Common myeloid progenitor, CD34-positive (primary cell): ENCODE measurements at regions of chr6 and their contacts with region 1.

Region 1: DNA sequence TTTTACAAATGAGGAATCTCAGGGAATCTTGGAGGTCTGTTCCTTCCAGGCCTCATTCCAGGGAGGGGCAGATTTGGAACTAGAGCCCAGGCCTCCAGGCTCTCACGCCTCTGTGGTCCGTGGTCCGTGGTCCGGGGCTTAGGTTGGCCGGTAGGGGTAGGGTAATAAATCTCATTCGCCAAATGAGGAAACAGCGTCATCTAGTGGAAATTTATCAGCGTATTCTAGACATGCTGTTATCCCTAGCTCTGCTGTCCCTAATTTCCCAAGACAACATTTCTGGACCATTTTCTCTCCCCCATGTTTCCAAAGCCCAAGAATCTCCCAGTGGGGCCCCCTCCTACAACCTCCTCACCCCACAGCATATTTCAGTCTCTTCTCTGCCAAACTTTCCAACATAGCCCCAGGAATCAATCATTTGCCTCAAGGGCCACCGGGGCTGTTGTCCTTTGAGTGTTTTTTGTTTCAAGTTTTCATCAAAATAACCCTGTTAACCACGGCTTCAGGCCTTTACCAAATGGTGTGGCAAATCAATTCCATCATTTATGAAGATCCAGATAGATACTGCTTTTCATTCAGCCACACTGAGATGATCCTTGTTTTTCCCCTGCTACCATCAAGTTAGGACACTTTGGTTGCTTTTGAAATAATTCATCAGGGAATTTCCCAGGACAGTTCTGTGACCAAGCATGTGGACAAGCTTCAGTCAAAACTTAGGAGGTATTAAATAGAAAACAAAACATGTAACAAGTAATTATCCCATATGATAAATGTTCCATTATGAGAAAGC is 126.8 kb downstream of the ALDH8A1 start:
- DNase-seq: peak; percentile 72 to 81 (median 76)
- H3K4me3 ChIP-seq: no peak overlapping the region
- H3K27ac ChIP-seq: no peak overlapping the region
- H3K4me1 ChIP-seq: no peaks in the 10 kb centered on the region
- H3K27me3 ChIP-seq: no peaks in the 10 kb centered on the region

Region 2: DNA sequence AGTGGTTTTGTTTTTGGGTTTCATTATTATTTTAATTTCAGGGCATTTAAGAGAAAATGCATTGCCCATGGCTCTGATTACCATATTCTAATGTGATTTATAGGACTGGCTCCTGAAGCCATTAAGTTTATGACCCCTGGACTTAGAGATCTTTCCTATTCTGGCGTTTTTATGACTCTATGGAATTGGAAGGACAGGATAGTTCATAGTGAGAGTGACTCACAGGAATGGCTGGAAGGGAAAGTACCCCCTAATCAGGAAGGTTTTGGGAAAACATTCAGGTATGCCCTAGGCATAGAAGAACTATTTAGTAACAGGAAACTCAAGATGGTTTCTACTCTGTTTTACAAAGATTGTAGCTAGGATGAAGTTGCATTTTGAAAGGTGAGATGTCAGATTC is 662.1 kb before region 1 on chr6:
- CTCF ChIA-PET with region 1: interaction called, 13 read pairs
- POLR2A ChIA-PET with region 1: no interaction called
- DNase-seq: no peak
- H3K4me3 ChIP-seq: no peak overlapping the region
- H3K27ac ChIP-seq: no peak overlapping the region
- H3K4me1 ChIP-seq: no peaks in the 10 kb centered on the region
- H3K27me3 ChIP-seq: no peaks in the 10 kb centered on the region

Region 3: GRCh38 chr6:134174672-134175198 is 648.4 kb before region 1 on chr6:
- CTCF ChIA-PET with region 1: interaction called, 12 read pairs
- POLR2A ChIA-PET with region 1: no interaction called
- DNase-seq: peak; percentile 76 to 86 (median 86)
- H3K4me3 ChIP-seq: peak overlapping the region; percentile 45 to 97 (median 76)
- H3K27ac ChIP-seq: peak overlapping the region in 1 of 2 experiments; percentile 63
- H3K4me1 ChIP-seq: peaks cover 31 to 60% (median 45%) of the 10 kb centered on the region in 4 experiments
- H3K27me3 ChIP-seq: peaks cover 0 to 26% (median 11%) of the 10 kb centered on the region in 5 experiments

Region 4: DNA sequence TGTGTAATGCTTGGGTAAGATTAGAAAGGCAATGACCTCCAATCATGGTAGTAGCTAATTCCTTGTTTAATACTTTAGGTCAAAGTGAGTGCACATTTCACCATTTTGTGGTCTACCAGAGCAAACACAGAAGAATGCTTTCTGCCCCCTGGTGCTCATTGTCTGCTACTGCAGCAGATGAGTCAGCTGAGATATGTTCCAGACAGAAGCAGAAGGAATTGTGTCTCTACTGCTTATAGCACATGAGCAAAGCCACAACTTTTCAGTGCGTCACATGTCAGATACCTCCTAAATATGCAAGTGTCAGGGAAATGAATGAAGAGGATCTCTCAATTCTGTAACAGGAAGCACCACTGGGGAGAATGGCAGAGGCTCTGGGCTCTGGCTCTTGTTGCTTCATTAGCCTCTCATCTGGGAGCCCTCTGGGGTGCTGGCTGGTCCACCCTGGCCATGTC is 182.1 kb before region 1 on chr6:
- CTCF ChIA-PET with region 1: interaction called, 4 read pairs
- POLR2A ChIA-PET with region 1: interaction called, 13 read pairs
- DNase-seq: peak; percentile 82 to 92 (median 89)
- H3K4me3 ChIP-seq: no peak overlapping the region
- H3K27ac ChIP-seq: no peak overlapping the region
- H3K4me1 ChIP-seq: peaks cover 0 to 12% (median 1%) of the 10 kb centered on the region in 4 experiments
- H3K27me3 ChIP-seq: peaks cover 0 to 5% (median 0%) of the 10 kb centered on the region in 5 experiments

Region 5: DNA sequence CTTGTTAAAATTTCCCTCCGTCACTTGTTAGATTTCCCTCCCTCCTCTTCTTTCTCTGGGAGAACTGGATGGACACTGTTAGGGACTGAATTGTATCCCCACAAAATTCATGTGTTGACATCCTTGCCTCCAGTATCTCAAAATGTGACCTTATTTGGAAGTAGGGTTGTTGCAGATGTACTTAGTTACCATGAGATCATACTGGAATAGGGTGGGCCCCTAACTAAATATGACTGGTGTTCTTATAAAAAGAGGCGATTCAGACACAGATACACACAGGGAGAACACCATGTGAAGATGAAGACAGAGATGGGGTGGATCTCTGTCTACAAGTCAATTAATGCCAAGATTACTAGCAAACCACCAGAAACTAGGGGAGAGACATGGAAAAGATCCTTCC is 12.7 kb before region 1 on chr6:
- CTCF ChIA-PET with region 1: interaction called, 12 read pairs
- POLR2A ChIA-PET with region 1: no interaction called
- DNase-seq: no peak
- H3K4me3 ChIP-seq: no peak overlapping the region
- H3K27ac ChIP-seq: no peak overlapping the region
- H3K4me1 ChIP-seq: no peaks in the 10 kb centered on the region
- H3K27me3 ChIP-seq: no peaks in the 10 kb centered on the region

Region 6: GRCh38 chr6:135146162-135146934 is 323.2 kb after region 1 on chr6:
- CTCF ChIA-PET with region 1: no interaction called
- POLR2A ChIA-PET with region 1: no interaction called
- DNase-seq: no peak
- H3K4me3 ChIP-seq: peak overlapping the region in 1 of 7 experiments; percentile 55
- H3K27ac ChIP-seq: no peak overlapping the region
- H3K4me1 ChIP-seq: peaks cover 7 to 40% (median 26%) of the 10 kb centered on the region in 4 experiments
- H3K27me3 ChIP-seq: no peaks in the 10 kb centered on the region